Natural killer cell (primary cell): ENCODE measurements at regions of chr1 and their contacts with region 1.

Region 1: GRCh38 chr1:11641776-11642305 is 12.4 kb downstream of the FBXO2 start:
- DNase-seq: no peak
- ATAC-seq: no peak
- H3K4me3 ChIP-seq: no peak overlapping the region
- H3K4me3 Mint-ChIP-seq: no peak overlapping the region
- H3K27ac ChIP-seq: no peak overlapping the region
- H3K27ac Mint-ChIP-seq: no peak overlapping the region
- H3K4me1 ChIP-seq: no peaks in the 10 kb centered on the region
- H3K4me1 Mint-ChIP-seq: peaks cover 0 to 9% of the 10 kb centered on the region in 2 donors
- H3K27me3 ChIP-seq: peaks cover 4% of the 10 kb centered on the region
- H3K27me3 Mint-ChIP-seq: no peaks in the 10 kb centered on the region
- CTCF ChIP-seq: no peak

Region 2: DNA sequence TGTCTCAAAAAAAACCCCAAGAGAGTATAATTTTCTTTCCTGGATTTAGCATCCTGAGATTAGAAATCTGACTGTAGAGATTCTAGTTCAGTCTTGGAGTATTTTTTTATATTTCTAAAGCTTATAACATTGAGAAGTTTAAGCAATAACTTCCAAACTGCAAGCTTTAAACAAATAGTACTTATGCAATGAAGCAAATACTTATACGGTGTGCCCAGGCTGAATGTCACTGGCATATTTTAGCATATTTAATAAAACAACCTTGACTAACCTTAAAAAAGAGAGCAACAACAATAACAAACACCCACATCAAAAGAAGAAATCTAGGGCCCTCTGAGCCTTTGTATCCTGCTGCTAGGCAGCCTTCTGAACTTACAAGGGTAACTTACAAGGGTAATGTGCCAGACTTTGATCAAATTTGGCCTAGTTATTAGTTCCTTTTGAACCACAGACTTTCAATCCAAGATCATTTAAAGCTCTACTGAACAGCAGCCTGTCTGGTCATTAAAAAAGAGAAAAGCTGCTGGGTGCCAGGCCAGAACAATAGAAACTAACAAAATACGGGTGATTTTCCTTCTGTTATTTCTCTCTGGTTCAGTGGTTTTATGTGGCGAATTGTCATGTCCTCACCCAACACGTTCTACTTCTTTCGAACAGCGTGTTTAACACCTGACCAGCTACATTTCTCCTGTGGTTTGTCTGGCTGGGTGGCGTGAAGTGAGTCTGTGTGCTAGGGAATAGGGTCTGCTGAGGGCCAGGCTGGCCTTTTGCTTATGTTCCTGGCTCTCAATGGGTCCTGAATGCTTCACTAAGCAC is 395.7 kb before region 1 on chr1:
- intact Hi-C with region 1: loop called (anchors 1 kb)
- DNase-seq: peak in 1 of 2 donors; percentile 42
- ATAC-seq: peak; percentile 62 to 81 (median 66)
- H3K4me3 ChIP-seq: no peak overlapping the region
- H3K4me3 Mint-ChIP-seq: peak overlapping the region; percentile 66
- H3K27ac ChIP-seq: peak overlapping the region; percentile 61
- H3K27ac Mint-ChIP-seq: peak overlapping the region; percentile 91 to 94
- H3K4me1 ChIP-seq: peaks cover 25% of the 10 kb centered on the region
- H3K4me1 Mint-ChIP-seq: peaks cover 24 to 40% of the 10 kb centered on the region in 2 donors
- H3K27me3 ChIP-seq: no peaks in the 10 kb centered on the region
- H3K27me3 Mint-ChIP-seq: no peaks in the 10 kb centered on the region
- CTCF ChIP-seq: no peak

Region 3: GRCh38 chr1:11320153-11320936 is 321.5 kb before region 1 on chr1:
- intact Hi-C with region 1: loop called (anchors 1 kb)
- DNase-seq: peak; percentile 47 to 62
- ATAC-seq: peak in 2 of 3 donors; percentile 50 to 82
- H3K4me3 ChIP-seq: no peak overlapping the region
- H3K4me3 Mint-ChIP-seq: peak overlapping the region; percentile 35
- H3K27ac ChIP-seq: no peak overlapping the region
- H3K27ac Mint-ChIP-seq: peak overlapping the region; percentile 21 to 68
- H3K4me1 ChIP-seq: peaks cover 18% of the 10 kb centered on the region
- H3K4me1 Mint-ChIP-seq: peaks cover 12 to 15% of the 10 kb centered on the region in 2 donors
- H3K27me3 ChIP-seq: no peaks in the 10 kb centered on the region
- H3K27me3 Mint-ChIP-seq: peaks cover 0 to 8% of the 10 kb centered on the region in 2 donors
- CTCF ChIP-seq: peak; percentile 68

Region 4: DNA sequence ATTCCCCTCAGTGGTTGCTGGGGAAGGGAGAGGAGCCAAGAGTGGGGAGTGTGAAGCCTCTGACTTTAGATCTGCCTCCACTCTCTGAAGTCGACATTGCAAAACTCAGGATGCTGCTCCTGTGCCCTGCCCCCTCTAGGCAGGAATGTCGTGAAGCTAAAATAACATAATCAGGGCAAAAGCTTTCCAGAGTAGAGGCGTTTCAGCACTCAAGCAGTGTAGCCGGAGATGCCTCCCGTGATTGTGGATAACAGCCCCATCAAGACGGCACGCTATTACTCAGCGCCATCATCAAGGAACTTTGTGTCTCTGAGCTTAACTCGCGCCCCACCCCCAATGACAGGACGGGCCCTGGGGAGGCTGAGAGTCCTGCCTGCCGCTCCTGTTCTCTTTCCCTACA is 47.6 kb before region 1 on chr1:
- intact Hi-C with region 1: no loop called
- DNase-seq: no peak
- ATAC-seq: no peak
- H3K4me3 ChIP-seq: no peak overlapping the region
- H3K4me3 Mint-ChIP-seq: no peak overlapping the region
- H3K27ac ChIP-seq: no peak overlapping the region
- H3K27ac Mint-ChIP-seq: no peak overlapping the region
- H3K4me1 ChIP-seq: no peaks in the 10 kb centered on the region
- H3K4me1 Mint-ChIP-seq: no peaks in the 10 kb centered on the region
- H3K27me3 ChIP-seq: no peaks in the 10 kb centered on the region
- H3K27me3 Mint-ChIP-seq: peaks cover 21 to 37% of the 10 kb centered on the region in 2 donors
- CTCF ChIP-seq: no peak